Caco-2 (cell line): ENCODE measurements at regions of chr6 and their contacts with region 1.

Region 1: DNA sequence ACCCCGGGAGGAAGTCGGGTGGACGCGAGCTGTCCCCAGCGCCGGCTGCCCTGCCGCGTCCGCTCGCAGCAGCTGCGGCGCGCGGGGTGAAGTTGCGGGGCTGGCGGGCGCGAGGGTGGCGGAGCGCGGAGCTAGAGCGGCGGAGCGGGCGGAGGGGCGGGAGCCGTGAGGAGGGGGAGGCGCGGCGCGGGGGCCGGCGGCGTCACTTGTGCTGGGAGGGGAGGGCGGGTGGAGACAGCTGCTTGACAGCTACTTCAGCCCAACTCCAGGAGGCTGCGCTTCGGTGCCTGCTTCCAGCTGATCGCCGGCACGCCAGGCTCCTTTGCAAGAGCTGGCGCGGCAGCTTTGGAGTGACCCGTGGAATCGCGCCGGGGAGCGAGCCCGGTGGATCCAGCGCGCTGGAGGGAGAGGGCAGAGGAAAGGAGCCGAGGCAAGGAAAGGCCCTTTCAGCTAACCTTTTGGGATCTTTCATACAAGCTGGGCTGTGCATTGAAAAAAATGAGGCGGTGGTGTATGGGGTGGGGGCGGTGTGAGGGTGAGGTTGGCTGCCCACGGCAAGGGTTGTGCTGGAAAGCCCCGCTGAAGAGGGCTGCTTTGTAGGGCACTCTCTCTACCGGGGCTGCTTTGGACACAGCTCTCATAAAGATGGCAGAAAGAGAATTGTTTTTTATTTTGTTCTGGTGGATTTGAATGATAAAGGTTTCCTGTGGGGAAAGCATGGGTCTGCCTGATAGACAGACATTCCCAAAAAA is 24.6 kb downstream of the RIPOR2 start:
- DNase-seq: peak; percentile 44 to 47
- H3K4me3 ChIP-seq: peak overlapping the region; percentile 40
- H3K4me3 Mint-ChIP-seq: peak overlapping the region; percentile 76
- H3K27ac Mint-ChIP-seq: no peak overlapping the region
- H3K4me1 ChIP-seq: no peaks in the 10 kb centered on the region
- H3K4me1 Mint-ChIP-seq: no peaks in the 10 kb centered on the region
- H3K27me3 ChIP-seq: peaks cover 4% of the 10 kb centered on the region
- H3K27me3 Mint-ChIP-seq: peaks cover 17% of the 10 kb centered on the region
- CTCF ChIP-seq: no peak

Region 2: DNA sequence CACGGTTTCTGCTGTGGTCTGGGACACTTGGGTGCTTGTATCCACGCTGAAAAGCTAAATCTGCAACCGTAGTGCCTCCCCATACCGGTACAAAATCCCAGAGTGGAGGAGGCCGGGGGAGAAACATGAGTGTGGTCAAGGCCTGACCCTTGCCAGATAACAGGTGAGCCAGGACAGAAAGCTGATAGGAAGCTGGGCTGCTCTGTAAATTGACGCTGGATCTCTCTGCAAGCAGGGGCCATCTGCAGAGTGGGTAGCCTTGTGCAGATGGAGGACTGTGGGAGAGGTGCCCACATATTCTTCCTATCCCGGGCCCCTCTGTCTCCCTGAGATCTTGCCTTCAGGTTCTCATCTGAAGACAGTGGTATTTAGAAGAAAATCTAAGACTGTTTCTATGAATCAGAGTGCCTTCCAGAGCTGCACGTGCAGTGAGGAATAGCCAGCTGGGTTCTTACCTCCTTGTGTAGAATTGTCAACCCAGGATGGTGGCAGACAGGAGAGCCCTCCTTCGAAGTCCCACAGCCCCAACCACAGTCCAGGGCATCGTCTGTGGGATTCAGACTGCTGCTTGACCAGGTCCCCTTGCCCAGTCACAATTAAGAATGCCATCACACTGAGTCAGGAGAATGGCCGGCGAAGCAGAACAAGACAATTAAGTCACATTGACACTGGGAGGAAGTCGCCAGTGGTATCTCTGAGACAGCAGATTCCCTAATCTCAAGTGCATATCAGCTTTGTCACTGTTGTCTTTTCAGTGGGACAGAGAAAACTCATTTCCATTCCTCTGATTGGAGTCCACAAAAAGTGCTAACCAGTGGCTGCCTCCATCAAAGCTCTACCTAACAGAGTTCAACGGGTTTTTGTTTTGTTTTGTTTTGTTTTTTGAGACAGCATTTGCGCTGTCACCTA is 124.6 kb after region 1 on chr6:
- CTCF ChIA-PET with region 1: no interaction called
- POLR2A ChIA-PET with region 1: no interaction called
- intact Hi-C with region 1: no loop called
- DNase-seq: no peak
- H3K4me3 ChIP-seq: no peak overlapping the region
- H3K4me3 Mint-ChIP-seq: no peak overlapping the region
- H3K27ac Mint-ChIP-seq: no peak overlapping the region
- H3K4me1 ChIP-seq: no peaks in the 10 kb centered on the region
- H3K4me1 Mint-ChIP-seq: no peaks in the 10 kb centered on the region
- H3K27me3 ChIP-seq: no peaks in the 10 kb centered on the region
- H3K27me3 Mint-ChIP-seq: peaks cover 3% of the 10 kb centered on the region
- CTCF ChIP-seq: no peak

Region 3: DNA sequence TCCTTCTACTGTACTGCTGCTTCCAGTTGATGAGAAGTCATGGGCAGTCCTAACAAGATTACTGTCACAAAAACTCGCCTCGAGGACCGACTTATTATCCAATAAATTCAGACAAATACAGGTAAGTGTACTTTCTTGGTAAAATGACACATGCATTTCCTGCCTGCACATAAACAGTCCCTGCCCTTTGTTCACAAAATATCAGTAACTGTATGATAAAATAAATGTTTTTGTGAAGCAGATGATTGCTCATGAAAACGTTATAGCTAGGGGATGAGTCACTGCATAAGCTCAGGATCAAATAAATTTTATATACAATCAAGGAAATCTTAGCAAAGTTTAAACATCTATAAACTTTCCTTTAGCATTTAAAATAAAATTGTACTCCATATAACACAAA is 189.2 kb after region 1 on chr6:
- CTCF ChIA-PET with region 1: no interaction called
- POLR2A ChIA-PET with region 1: interaction called, 28 read pairs
- intact Hi-C with region 1: no loop called
- DNase-seq: no peak
- H3K4me3 ChIP-seq: no peak overlapping the region
- H3K4me3 Mint-ChIP-seq: no peak overlapping the region
- H3K27ac Mint-ChIP-seq: no peak overlapping the region
- H3K4me1 ChIP-seq: no peaks in the 10 kb centered on the region
- H3K4me1 Mint-ChIP-seq: peaks cover 5% of the 10 kb centered on the region
- H3K27me3 ChIP-seq: no peaks in the 10 kb centered on the region
- H3K27me3 Mint-ChIP-seq: peaks cover 12% of the 10 kb centered on the region
- CTCF ChIP-seq: no peak